A549 (cell line): ENCODE measurements at regions of chr20 and their contacts with region 1.

Region 1: DNA sequence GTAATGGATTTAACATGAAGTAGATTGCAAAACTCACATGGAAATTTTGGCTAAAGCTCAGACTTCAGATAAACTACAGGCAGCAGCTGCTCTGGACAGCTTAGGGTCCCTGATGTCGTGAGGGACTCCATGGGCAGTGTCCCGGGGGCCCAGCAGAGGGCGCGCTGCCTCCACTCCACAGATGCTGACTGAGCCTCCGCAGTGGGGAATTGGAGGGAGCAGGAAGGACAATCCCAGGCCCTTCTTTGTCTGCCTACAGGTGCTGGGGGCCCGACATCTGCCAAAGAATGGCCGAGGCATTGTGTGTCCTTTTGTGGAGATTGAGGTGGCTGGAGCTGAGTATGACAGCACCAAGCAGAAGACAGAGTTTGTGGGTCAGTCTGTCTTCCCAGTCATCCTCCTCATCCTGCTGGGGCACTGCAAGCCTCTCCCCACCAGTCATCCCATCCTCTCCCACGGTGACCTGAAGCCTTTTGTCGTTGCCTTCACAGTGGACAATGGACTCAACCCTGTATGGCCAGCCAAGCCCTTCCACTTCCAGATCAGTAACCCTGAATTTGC is 35.9 kb downstream of the PLCG1 start:
- DNase-seq: peak; percentile 60 to 81
- ATAC-seq: peak; percentile 89 to 95
- H3K4me3 ChIP-seq: no peak overlapping the region
- H3K27ac ChIP-seq: no peak overlapping the region
- H3K4me1 ChIP-seq: peaks cover 11% of the 10 kb centered on the region; the same call in 2 of the 3 replicates
- CTCF ChIP-seq: peak; percentile 85
- EP300 ChIP-seq: no peak
- POLR2A ChIP-seq: no peak
- RAD21 ChIP-seq: peak; percentile 89 to 93

Region 2: DNA sequence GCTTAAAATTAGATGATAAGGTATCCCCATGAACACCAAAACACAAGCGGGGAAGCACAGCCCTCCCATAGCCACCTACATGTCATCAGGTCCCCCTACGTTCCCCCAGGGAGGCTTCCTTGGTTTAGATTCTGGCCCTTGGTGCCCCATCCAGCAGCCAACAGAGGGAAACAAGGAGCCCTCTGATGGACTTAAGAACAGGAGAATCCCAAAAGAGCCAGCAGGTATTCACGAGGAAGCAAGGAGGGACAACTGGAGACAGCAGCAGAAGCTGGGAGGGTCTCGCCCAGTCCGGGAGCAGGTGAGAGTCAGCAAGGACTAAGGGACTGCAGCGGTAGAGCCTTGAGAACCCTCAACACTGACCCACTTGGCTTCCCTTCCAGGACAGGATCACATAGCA is 203.0 kb before region 1 on chr20:
- CTCF ChIA-PET with region 1: interaction called, 15 read pairs
- POLR2A ChIA-PET with region 1: no interaction called
- DNase-seq: no peak
- ATAC-seq: peak; percentile 16 to 38; a peak in 2 of 6 replicates
- H3K4me3 ChIP-seq: no peak overlapping the region
- H3K27ac ChIP-seq: no peak overlapping the region
- H3K4me1 ChIP-seq: no peaks in the 10 kb centered on the region
- CTCF ChIP-seq: no peak
- EP300 ChIP-seq: no peak
- POLR2A ChIP-seq: no peak
- RAD21 ChIP-seq: peak in 1 of 2 experiments; percentile 6; a peak in 1 of 5 replicates

Region 3: GRCh38 chr20:41078329-41078728 is 94.9 kb before region 1 on chr20:
- CTCF ChIA-PET with region 1: no interaction called
- POLR2A ChIA-PET with region 1: no interaction called
- DNase-seq: peak; percentile 15 to 38
- ATAC-seq: peak; percentile 82 to 86
- H3K4me3 ChIP-seq: no peak overlapping the region
- H3K27ac ChIP-seq: no peak overlapping the region
- H3K4me1 ChIP-seq: peaks cover 19% of the 10 kb centered on the region; the same call in 2 of the 3 replicates
- CTCF ChIP-seq: peak; percentile 53
- EP300 ChIP-seq: no peak
- POLR2A ChIP-seq: no peak
- RAD21 ChIP-seq: peak; percentile 56 to 62

Region 4: DNA sequence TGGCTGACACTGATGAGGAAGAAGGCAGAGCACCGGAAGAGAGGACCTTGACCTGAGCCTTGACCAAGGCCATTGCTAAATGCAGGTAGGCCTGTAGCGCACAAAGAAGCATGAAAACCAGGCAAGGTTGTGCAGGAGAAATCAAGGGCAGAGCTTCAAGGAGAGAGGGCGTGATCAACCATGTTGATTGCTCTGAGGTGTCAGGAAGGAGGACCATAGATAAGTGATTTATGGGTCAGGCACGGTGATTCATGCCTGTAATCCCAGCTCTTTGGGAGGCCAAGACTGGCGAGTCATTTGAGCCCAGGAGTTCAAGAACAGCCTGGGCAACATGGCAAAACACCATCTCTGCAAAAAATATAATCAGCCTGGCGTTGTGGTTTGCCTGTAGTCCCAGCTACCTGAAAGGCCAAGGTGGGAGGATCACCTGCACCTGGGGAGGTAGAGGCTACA is 23.5 kb before region 1 on chr20:
- CTCF ChIA-PET with region 1: interaction called, 43 read pairs
- POLR2A ChIA-PET with region 1: no interaction called
- DNase-seq: peak in 1 of 2 experiments; percentile 32
- ATAC-seq: peak in 1 of 2 experiments; percentile 63; a peak in 3 of 6 replicates
- H3K4me3 ChIP-seq: no peak overlapping the region
- H3K27ac ChIP-seq: no peak overlapping the region
- H3K4me1 ChIP-seq: 0 out of 3 replicates have a peak, but pooled peaks cover 8% of the 10 kb centered on the region
- CTCF ChIP-seq: no peak
- EP300 ChIP-seq: no peak
- POLR2A ChIP-seq: no peak
- RAD21 ChIP-seq: no peak

Region 5: GRCh38 chr20:41185013-41185757 is 11.9 kb after region 1 on chr20:
- CTCF ChIA-PET with region 1: interaction called, 19 read pairs
- POLR2A ChIA-PET with region 1: no interaction called
- DNase-seq: no peak
- ATAC-seq: no peak; a peak in 1 of 6 replicates
- H3K4me3 ChIP-seq: no peak overlapping the region
- H3K27ac ChIP-seq: no peak overlapping the region
- H3K4me1 ChIP-seq: no peaks in the 10 kb centered on the region
- CTCF ChIP-seq: no peak
- EP300 ChIP-seq: no peak
- POLR2A ChIP-seq: no peak
- RAD21 ChIP-seq: no peak

Region 6: GRCh38 chr20:41218466-41218865 is 45.2 kb after region 1 on chr20:
- CTCF ChIA-PET with region 1: interaction called, 15 read pairs
- POLR2A ChIA-PET with region 1: no interaction called
- DNase-seq: no peak
- ATAC-seq: no peak
- H3K4me3 ChIP-seq: no peak overlapping the region
- H3K27ac ChIP-seq: no peak overlapping the region
- H3K4me1 ChIP-seq: no peaks in the 10 kb centered on the region
- CTCF ChIP-seq: no peak
- EP300 ChIP-seq: no peak
- POLR2A ChIP-seq: no peak
- RAD21 ChIP-seq: no peak

Region 7: DNA sequence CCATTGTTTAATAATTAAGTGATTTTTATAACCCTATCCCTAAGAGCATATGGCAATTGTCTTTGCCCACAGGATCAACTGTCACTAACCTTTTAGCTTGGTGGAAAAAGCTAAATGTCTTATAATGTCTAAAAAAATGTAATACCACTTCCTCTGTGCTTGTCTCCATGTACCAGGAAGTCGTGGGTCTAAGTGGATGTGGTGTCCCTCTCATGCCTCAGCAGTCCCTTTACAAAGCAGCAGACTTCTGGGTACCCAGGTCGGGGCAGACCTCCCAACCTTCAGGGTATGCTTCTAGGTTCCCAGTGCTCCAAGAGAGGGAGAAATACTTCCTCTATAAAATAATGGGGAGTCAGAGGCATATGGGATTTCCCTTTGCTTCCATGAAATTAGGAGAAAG is 69.6 kb after region 1 on chr20:
- CTCF ChIA-PET with region 1: interaction called, 13 read pairs
- POLR2A ChIA-PET with region 1: no interaction called
- DNase-seq: no peak
- ATAC-seq: no peak
- H3K4me3 ChIP-seq: no peak overlapping the region
- H3K27ac ChIP-seq: no peak overlapping the region
- H3K4me1 ChIP-seq: no peaks in the 10 kb centered on the region
- CTCF ChIP-seq: no peak
- EP300 ChIP-seq: no peak
- POLR2A ChIP-seq: no peak
- RAD21 ChIP-seq: no peak

Region 8: GRCh38 chr20:41329435-41330342 is 156.4 kb after region 1 on chr20:
- CTCF ChIA-PET with region 1: interaction called, 13 read pairs
- POLR2A ChIA-PET with region 1: no interaction called
- DNase-seq: peak; percentile 44 to 65
- ATAC-seq: peak; percentile 93
- H3K4me3 ChIP-seq: no peak overlapping the region
- H3K27ac ChIP-seq: peak overlapping the region; percentile 63 to 82
- H3K4me1 ChIP-seq: peaks cover 15% of the 10 kb centered on the region
- CTCF ChIP-seq: no peak
- EP300 ChIP-seq: no peak
- POLR2A ChIP-seq: no peak
- RAD21 ChIP-seq: no peak